Naive thymus-derived CD4-positive, alpha-beta T cell (primary cell): ENCODE measurements at regions of chr12 and their contacts with region 1.

Region 1: DNA sequence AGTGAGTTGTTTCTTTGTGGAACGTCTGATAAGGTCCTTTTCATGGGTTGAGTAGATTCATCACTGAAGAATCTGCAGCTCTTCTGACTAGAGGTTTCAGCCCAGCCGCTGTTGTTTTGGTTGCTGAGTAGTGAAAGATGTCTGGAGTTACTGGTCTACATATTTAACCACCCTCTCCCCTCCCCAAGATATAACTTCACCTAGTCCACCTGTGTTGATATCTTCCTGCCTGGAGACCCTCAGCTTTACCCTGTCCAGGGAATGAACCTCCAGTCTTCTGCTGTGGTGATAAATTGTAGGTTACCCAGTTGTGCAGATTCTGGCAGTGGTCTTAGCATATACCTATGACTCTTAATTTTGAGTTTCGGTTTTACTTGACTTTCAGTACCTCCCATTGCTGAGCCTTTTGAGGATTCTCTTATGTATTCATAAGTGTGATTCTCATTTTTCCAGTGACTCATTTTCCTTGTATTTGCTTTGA is 62.9 kb downstream of the CCDC91 start:
- DNase-seq: peak in 8 of 9 donors; percentile 4 to 45 (median 21)
- ATAC-seq: peak; percentile 78
- H3K4me3 ChIP-seq: peak overlapping the region; percentile 18
- H3K4me3 Mint-ChIP-seq: peak overlapping the region; percentile 55 to 83 (median 80)
- H3K27ac ChIP-seq: no peak overlapping the region
- H3K27ac Mint-ChIP-seq: peak overlapping the region; percentile 66 to 89 (median 79)
- H3K4me1 ChIP-seq: peaks cover 16 to 29% of the 10 kb centered on the region in 2 donors
- H3K4me1 Mint-ChIP-seq: peaks cover 35 to 64% (median 58%) of the 10 kb centered on the region in 7 donors
- H3K27me3 ChIP-seq: no peaks in the 10 kb centered on the region
- H3K27me3 Mint-ChIP-seq: no peaks in the 10 kb centered on the region

Region 2: GRCh38 chr12:28237423-28237822 is 15.8 kb before region 1 on chr12:
- CTCF ChIA-PET with region 1: no interaction called
- POLR2A ChIA-PET with region 1: interaction called, 3 read pairs
- intact Hi-C with region 1: loop called in 1 of 2 experiments (anchors 2 kb)
- DNase-seq: no peak
- ATAC-seq: no peak
- H3K4me3 ChIP-seq: no peak overlapping the region
- H3K4me3 Mint-ChIP-seq: no peak overlapping the region
- H3K27ac ChIP-seq: no peak overlapping the region
- H3K27ac Mint-ChIP-seq: no peak overlapping the region
- H3K4me1 ChIP-seq: no peaks in the 10 kb centered on the region
- H3K4me1 Mint-ChIP-seq: peaks cover 2 to 42% (median 34%) of the 10 kb centered on the region in 7 donors
- H3K27me3 ChIP-seq: no peaks in the 10 kb centered on the region
- H3K27me3 Mint-ChIP-seq: no peaks in the 10 kb centered on the region

Region 3: DNA sequence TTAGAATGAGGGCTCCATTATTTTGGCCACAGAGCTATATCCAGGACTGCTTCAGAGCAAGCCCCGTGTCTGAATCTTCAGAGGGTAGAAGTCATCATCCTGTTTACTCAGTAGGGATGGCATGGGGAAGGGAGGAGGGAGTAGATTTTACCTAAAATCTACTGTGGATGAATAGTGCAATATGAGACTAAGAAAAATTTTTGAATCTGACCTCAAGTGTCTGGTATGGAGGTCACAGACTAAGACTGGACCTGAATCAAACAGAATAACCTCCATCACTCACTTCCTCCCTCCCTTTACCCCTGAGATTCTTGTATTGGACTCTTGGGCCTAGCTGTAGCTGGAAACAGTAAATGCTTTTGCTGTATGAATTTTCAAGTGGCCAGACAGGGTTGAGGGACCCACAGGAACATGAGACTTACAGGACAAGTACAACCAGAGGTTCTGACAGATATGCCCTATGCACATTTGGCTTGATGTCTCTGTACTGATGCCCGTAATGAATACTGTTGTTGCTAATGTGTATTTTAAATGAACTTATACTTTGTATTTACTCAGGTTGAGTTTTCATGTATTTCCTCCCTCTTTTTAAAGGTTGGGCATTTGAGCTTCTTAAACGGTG is 15.5 kb after region 1 on chr12:
- CTCF ChIA-PET with region 1: no interaction called
- POLR2A ChIA-PET with region 1: no interaction called
- intact Hi-C with region 1: loop called (anchors 2 kb)
- DNase-seq: no peak
- ATAC-seq: no peak
- H3K4me3 ChIP-seq: no peak overlapping the region
- H3K4me3 Mint-ChIP-seq: no peak overlapping the region
- H3K27ac ChIP-seq: no peak overlapping the region
- H3K27ac Mint-ChIP-seq: no peak overlapping the region
- H3K4me1 ChIP-seq: no peaks in the 10 kb centered on the region
- H3K4me1 Mint-ChIP-seq: peaks cover 0 to 4% (median 0%) of the 10 kb centered on the region in 7 donors
- H3K27me3 ChIP-seq: no peaks in the 10 kb centered on the region
- H3K27me3 Mint-ChIP-seq: no peaks in the 10 kb centered on the region